Caco-2 (cell line): ENCODE measurements at regions of chr9 and their contacts with region 1.

Region 1: DNA sequence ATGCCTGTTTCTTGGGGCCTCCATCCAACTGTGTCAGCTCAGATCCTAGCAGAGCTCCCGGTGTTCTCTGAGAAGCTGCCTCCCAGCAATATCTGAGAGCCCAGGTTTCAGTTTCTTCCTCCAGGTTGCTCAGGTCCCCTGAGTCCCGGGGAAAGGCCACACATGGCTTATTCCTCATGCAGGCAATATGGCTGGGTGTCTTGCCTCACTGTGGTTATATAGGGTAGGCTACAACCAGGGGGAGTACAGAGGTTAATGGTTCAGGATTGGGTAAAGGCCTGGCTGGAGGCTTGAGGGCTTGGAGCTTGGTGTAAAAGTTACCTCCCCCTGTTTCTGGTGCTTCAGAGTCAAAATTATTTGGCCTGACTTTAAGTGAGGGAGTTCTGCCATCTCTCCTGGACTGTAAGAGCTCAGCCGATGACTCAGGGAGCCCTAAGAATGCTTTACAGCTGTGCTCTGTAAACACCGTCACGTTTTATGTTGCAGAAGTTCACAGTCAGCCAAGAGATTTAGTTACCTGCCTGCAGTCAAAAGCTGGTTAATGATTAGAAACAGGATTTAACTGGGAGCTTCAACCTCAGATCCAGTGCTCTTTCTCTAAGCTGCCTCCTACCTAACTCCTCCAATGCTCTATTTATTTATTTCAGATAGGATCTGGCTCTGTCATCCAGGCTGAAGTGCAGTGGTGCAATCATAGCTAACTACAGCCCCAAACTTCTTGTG is 24.3 kb upstream of the UBAP2 start:
- DNase-seq: peak; percentile 84 to 88
- H3K4me3 ChIP-seq: no peak overlapping the region
- H3K4me3 Mint-ChIP-seq: peak overlapping the region; percentile 67
- H3K27ac Mint-ChIP-seq: peak overlapping the region; percentile 91
- H3K4me1 ChIP-seq: peaks cover 33% of the 10 kb centered on the region
- H3K4me1 Mint-ChIP-seq: peaks cover 34% of the 10 kb centered on the region
- H3K27me3 ChIP-seq: no peaks in the 10 kb centered on the region
- H3K27me3 Mint-ChIP-seq: no peaks in the 10 kb centered on the region
- CTCF ChIP-seq: no peak

Region 2: GRCh38 chr9:33816327-33817252 is 256.4 kb before region 1 on chr9 and contains the start of gene UBE2R2:
- CTCF ChIA-PET with region 1: interaction called, 9 read pairs
- POLR2A ChIA-PET with region 1: no interaction called
- intact Hi-C with region 1: loop called (anchors 5 kb)
- DNase-seq: peak; percentile 89 to 96
- H3K4me3 ChIP-seq: peak within 1 kb of the TSS; percentile 89
- H3K4me3 Mint-ChIP-seq: peak within 1 kb of the TSS; percentile 90
- H3K27ac Mint-ChIP-seq: peak within 1 kb of the TSS; percentile 91
- H3K4me1 ChIP-seq: peaks cover 34% of the 10 kb centered on the region
- H3K4me1 Mint-ChIP-seq: peaks cover 20% of the 10 kb centered on the region
- H3K27me3 ChIP-seq: no peaks in the 10 kb centered on the region
- H3K27me3 Mint-ChIP-seq: no peaks in the 10 kb centered on the region
- CTCF ChIP-seq: no peak
- total RNA-seq, gene UBE2R2: 48.1 and 52.3 TPM in 2 replicates

Region 3: DNA sequence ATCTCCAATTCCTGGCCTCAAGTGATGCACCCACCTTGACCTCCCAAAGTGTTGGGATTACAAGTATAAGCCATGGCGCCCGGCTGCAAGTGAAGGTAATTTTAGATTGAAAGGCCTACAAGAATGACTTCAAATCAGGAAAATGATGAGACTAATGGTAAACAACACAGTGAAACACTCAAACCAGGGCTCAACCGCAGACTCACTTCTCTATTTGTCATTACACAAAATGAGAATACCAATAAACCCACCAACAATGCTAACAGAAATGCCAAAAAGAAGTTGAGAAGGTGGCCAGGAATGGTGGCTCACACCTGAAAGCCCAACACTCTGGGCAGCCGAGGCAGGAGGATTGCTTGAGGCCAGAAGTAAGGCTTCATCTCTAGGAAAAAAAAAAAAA is 116.5 kb before region 1 on chr9:
- CTCF ChIA-PET with region 1: no interaction called
- POLR2A ChIA-PET with region 1: no interaction called
- intact Hi-C with region 1: no loop called
- DNase-seq: no peak
- H3K4me3 ChIP-seq: no peak overlapping the region
- H3K4me3 Mint-ChIP-seq: no peak overlapping the region
- H3K27ac Mint-ChIP-seq: no peak overlapping the region
- H3K4me1 ChIP-seq: no peaks in the 10 kb centered on the region
- H3K4me1 Mint-ChIP-seq: no peaks in the 10 kb centered on the region
- H3K27me3 ChIP-seq: no peaks in the 10 kb centered on the region
- H3K27me3 Mint-ChIP-seq: no peaks in the 10 kb centered on the region
- CTCF ChIP-seq: no peak

Region 4: DNA sequence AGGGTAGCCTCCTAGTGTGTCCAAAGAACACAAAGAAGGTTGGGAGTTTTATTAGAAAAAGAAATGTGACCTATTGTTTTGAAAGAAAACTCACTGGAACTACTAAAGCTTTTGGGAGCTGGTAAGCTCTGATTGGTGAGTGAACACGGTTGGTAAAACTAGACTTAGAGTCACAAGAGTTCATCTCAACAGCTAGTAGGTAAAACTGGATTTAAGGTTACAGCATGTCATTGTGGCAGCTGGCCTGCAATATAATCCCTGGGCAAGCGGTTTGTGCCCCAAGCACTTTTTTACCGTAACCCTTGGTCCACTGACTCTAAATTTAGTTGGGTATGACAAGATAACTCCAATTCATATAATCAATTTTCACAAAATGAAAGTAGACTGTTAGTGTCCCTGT is 71.7 kb before region 1 on chr9:
- CTCF ChIA-PET with region 1: interaction called, 10 read pairs
- POLR2A ChIA-PET with region 1: interaction called, 12 read pairs
- intact Hi-C with region 1: no loop called
- DNase-seq: no peak
- H3K4me3 ChIP-seq: no peak overlapping the region
- H3K4me3 Mint-ChIP-seq: no peak overlapping the region
- H3K27ac Mint-ChIP-seq: no peak overlapping the region
- H3K4me1 ChIP-seq: no peaks in the 10 kb centered on the region
- H3K4me1 Mint-ChIP-seq: no peaks in the 10 kb centered on the region
- H3K27me3 ChIP-seq: no peaks in the 10 kb centered on the region
- H3K27me3 Mint-ChIP-seq: no peaks in the 10 kb centered on the region
- CTCF ChIP-seq: no peak

Region 5: GRCh38 chr9:34035656-34036055 is 37.4 kb before region 1 on chr9:
- CTCF ChIA-PET with region 1: interaction called, 5 read pairs
- POLR2A ChIA-PET with region 1: interaction called, 19 read pairs
- intact Hi-C with region 1: loop called (anchors 1 kb)
- DNase-seq: peak; percentile 55 to 67
- H3K4me3 ChIP-seq: no peak overlapping the region
- H3K4me3 Mint-ChIP-seq: peak overlapping the region; percentile 60
- H3K27ac Mint-ChIP-seq: peak overlapping the region; percentile 75
- H3K4me1 ChIP-seq: peaks cover 42% of the 10 kb centered on the region
- H3K4me1 Mint-ChIP-seq: peaks cover 22% of the 10 kb centered on the region
- H3K27me3 ChIP-seq: no peaks in the 10 kb centered on the region
- H3K27me3 Mint-ChIP-seq: no peaks in the 10 kb centered on the region
- CTCF ChIP-seq: no peak

Region 6: GRCh38 chr9:34059281-34059680 is 13.7 kb before region 1 on chr9:
- CTCF ChIA-PET with region 1: no interaction called
- POLR2A ChIA-PET with region 1: no interaction called
- intact Hi-C with region 1: loop called (anchors 2 kb)
- DNase-seq: no peak
- H3K4me3 ChIP-seq: no peak overlapping the region
- H3K4me3 Mint-ChIP-seq: no peak overlapping the region
- H3K27ac Mint-ChIP-seq: no peak overlapping the region
- H3K4me1 ChIP-seq: peaks cover 8% of the 10 kb centered on the region; the same call in 1 of the 2 replicates
- H3K4me1 Mint-ChIP-seq: peaks cover 7% of the 10 kb centered on the region
- H3K27me3 ChIP-seq: no peaks in the 10 kb centered on the region
- H3K27me3 Mint-ChIP-seq: no peaks in the 10 kb centered on the region
- CTCF ChIP-seq: no peak

Region 7: GRCh38 chr9:34126207-34127034 is 53.4 kb after region 1 on chr9 and contains the start of gene DCAF12:
- CTCF ChIA-PET with region 1: no interaction called
- POLR2A ChIA-PET with region 1: interaction called, 3 read pairs
- intact Hi-C with region 1: loop called (anchors 2 kb)
- DNase-seq: peak; percentile 89 to 92
- H3K4me3 ChIP-seq: peak within 1 kb of the TSS; percentile 62
- H3K4me3 Mint-ChIP-seq: peak within 1 kb of the TSS; percentile 86
- H3K27ac Mint-ChIP-seq: peak within 1 kb of the TSS; percentile 90
- H3K4me1 ChIP-seq: peaks cover 21% of the 10 kb centered on the region
- H3K4me1 Mint-ChIP-seq: peaks cover 27% of the 10 kb centered on the region
- H3K27me3 ChIP-seq: no peaks in the 10 kb centered on the region
- H3K27me3 Mint-ChIP-seq: no peaks in the 10 kb centered on the region
- CTCF ChIP-seq: no peak
- total RNA-seq, gene DCAF12: 33.0 and 34.1 TPM in 2 replicates

Region 8: DNA sequence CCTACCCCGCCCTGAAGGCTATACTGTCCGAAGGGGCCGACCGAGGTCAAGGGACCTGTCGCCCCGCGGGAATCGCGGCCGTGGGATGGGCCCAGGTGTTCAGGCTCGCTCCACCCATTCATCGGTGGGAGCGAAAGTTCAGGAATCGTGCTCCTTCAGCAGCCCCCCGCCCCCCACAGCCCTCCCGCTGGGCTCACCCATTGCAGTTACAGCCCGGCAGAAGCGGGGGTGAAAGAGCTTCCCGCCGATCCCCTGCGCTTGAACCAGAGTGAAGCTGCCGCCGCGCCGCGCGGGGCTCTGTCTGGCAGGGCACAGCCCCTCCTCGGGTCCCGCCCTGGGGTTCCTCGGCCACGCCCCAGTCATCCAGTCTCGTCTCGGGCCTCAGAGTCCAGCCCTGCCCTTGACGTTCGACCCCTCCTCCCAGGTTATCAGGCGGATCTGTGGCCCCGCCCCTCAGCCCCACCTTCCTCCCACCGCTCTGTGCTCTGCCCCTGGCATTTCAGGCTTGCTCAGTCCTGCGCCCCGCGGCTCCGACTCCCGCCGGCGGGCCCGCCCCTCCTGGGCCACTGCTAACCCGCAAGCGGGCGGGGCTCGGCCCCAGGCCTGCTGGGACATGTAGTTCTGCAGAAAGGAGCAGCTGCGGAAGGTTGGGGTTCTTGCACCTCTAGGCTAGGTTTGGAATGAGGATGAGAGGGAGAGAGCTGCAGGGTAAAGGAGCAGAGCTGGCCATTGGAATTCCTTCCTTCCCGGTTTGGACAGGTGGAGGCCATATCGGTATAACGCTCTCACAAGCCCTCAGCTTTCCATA is 303.8 kb after region 1 on chr9 and contains the start of gene MYORG:
- CTCF ChIA-PET with region 1: interaction called, 3 read pairs
- POLR2A ChIA-PET with region 1: no interaction called
- intact Hi-C with region 1: loop called (anchors 5 kb)
- DNase-seq: peak; percentile 99
- H3K4me3 ChIP-seq: peak within 1 kb of the TSS; percentile 89
- H3K4me3 Mint-ChIP-seq: peak within 1 kb of the TSS; percentile 88
- H3K27ac Mint-ChIP-seq: peak within 1 kb of the TSS; percentile 49
- H3K4me1 ChIP-seq: peaks cover 29% of the 10 kb centered on the region
- H3K4me1 Mint-ChIP-seq: peaks cover 26% of the 10 kb centered on the region
- H3K27me3 ChIP-seq: no peaks in the 10 kb centered on the region
- H3K27me3 Mint-ChIP-seq: no peaks in the 10 kb centered on the region
- CTCF ChIP-seq: no peak
- total RNA-seq, gene MYORG: 33.4 and 37.3 TPM in 2 replicates